ENCODE measurements at regions of chr19 and their contacts with region 1.

Region 1: DNA sequence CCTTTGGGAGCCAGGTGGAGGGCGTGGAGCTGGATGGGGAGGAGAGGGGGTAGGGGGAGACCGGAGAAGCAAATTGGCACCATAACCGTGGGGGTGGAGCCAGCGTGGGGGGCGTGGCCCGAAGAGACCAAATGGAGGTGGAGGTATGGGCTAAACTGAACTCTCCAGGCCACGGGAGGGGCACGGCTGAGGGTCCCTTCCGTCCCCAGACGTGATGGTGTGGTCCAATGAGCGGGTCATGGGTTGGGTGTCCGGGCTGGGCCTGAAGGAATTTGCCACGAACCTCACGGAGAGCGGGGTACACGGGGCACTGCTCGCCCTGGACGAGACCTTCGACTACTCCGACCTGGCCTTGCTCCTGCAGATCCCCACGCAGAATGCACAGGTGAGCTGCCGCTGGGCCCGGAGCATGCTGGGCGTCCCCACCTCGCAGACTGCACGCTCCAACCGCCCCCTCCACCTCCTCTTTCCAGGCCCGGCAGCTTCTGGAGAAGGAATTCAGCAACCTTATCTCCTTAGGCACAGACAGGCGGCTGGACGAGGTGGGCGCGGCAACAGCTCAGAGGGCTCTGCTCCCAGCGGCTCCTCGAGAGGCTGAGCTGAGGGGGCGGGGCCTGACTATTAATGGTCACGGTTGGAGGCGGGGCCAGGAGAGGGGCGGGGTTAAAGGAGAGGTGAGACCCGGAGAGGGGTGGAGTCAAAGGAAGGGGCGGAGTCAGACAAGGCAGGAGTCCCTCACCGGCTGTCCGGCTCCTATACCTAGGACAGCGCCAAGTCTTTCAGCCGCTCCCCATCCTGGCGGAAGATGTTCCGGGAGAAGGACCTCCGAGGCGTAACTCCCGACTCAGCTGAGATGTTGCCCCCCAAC is 6.2 kb downstream of the HRC start:
- DNase-seq: peak; percentile 92 to 99 (median 94)
- ATAC-seq: peak; percentile 63
- H3K4me3 ChIP-seq: peak overlapping the region; percentile 54
- H3K27ac ChIP-seq: peak overlapping the region; percentile 89
- H3K4me1 ChIP-seq: peaks cover 40 to 79% of the 10 kb centered on the region in 2 experiments
- H3K27me3 ChIP-seq: no peaks in the 10 kb centered on the region
- CTCF ChIP-seq: peak in 1 of 3 experiments; percentile 0; a peak in 1 of 6 replicates
- EP300 ChIP-seq: peak; percentile 52
- POLR2A ChIP-seq: peak; percentile 33; the same call in 1 of the 2 replicates
- RAD21 ChIP-seq: no peak

Region 2: GRCh38 chr19:48333467-48334384 is 815.3 kb before region 1 on chr19:
- CTCF ChIA-PET with region 1: no interaction called
- POLR2A ChIA-PET with region 1: no interaction called
- in situ Hi-C with region 1: no loop called
- intact Hi-C with region 1: loop called (anchors 5 kb)
- DNase-seq: peak; percentile 92 to 97 (median 94)
- ATAC-seq: peak; percentile 89
- H3K4me3 ChIP-seq: peak overlapping the region; percentile 50
- H3K27ac ChIP-seq: peak overlapping the region; percentile 91
- H3K4me1 ChIP-seq: peaks cover 21 to 61% of the 10 kb centered on the region in 2 experiments
- H3K27me3 ChIP-seq: no peaks in the 10 kb centered on the region
- CTCF ChIP-seq: peak; percentile 78 to 99 (median 98)
- EP300 ChIP-seq: no peak
- POLR2A ChIP-seq: peak; percentile 70
- RAD21 ChIP-seq: peak; percentile 98 to 99

Region 3: GRCh38 chr19:48993175-48994034 is 155.6 kb before region 1 on chr19 and contains the starts of genes GYS1 and RUVBL2:
- CTCF ChIA-PET with region 1: no interaction called
- POLR2A ChIA-PET with region 1: interaction called, 3 read pairs
- in situ Hi-C with region 1: no loop called
- intact Hi-C with region 1: loop called (anchors 10 kb)
- DNase-seq: peak; percentile 98 to 100 (median 99)
- ATAC-seq: peak; percentile 95
- H3K4me3 ChIP-seq: peak within 1 kb of the TSS; percentile 87
- H3K27ac ChIP-seq: peak within 1 kb of the TSS; percentile 91
- H3K4me1 ChIP-seq: peaks cover 5 to 30% of the 10 kb centered on the region in 2 experiments; a peak in 4 of 5 replicates
- H3K27me3 ChIP-seq: no peaks in the 10 kb centered on the region
- CTCF ChIP-seq: peak; percentile 97 to 98 (median 98)
- EP300 ChIP-seq: peak; percentile 85
- POLR2A ChIP-seq: peak; percentile 96
- RAD21 ChIP-seq: peak; percentile 36 to 46
- polyA plus RNA-seq, gene GYS1: 1.9 to 2.2 TPM
- polyA plus RNA-seq, gene RUVBL2: 71.4 to 95.3 TPM

Region 4: GRCh38 chr19:49097455-49098288 is 51.3 kb before region 1 on chr19:
- CTCF ChIA-PET with region 1: interaction called, 13 read pairs
- POLR2A ChIA-PET with region 1: interaction called, 3 read pairs
- in situ Hi-C with region 1: no loop called
- intact Hi-C with region 1: loop called (anchors 1 kb)
- DNase-seq: peak; percentile 76 to 86 (median 78)
- ATAC-seq: peak; percentile 89
- H3K4me3 ChIP-seq: no peak overlapping the region
- H3K27ac ChIP-seq: peak overlapping the region; percentile 46; the same call in 1 of the 3 replicates
- H3K4me1 ChIP-seq: peaks cover 0 to 11% of the 10 kb centered on the region in 2 experiments; a peak in 3 of 5 replicates
- H3K27me3 ChIP-seq: no peaks in the 10 kb centered on the region
- CTCF ChIP-seq: peak; percentile 92 to 98 (median 93)
- EP300 ChIP-seq: no peak
- POLR2A ChIP-seq: no peak; the same call in 1 of the 2 replicates
- RAD21 ChIP-seq: peak; percentile 86 to 93

Region 5: DNA sequence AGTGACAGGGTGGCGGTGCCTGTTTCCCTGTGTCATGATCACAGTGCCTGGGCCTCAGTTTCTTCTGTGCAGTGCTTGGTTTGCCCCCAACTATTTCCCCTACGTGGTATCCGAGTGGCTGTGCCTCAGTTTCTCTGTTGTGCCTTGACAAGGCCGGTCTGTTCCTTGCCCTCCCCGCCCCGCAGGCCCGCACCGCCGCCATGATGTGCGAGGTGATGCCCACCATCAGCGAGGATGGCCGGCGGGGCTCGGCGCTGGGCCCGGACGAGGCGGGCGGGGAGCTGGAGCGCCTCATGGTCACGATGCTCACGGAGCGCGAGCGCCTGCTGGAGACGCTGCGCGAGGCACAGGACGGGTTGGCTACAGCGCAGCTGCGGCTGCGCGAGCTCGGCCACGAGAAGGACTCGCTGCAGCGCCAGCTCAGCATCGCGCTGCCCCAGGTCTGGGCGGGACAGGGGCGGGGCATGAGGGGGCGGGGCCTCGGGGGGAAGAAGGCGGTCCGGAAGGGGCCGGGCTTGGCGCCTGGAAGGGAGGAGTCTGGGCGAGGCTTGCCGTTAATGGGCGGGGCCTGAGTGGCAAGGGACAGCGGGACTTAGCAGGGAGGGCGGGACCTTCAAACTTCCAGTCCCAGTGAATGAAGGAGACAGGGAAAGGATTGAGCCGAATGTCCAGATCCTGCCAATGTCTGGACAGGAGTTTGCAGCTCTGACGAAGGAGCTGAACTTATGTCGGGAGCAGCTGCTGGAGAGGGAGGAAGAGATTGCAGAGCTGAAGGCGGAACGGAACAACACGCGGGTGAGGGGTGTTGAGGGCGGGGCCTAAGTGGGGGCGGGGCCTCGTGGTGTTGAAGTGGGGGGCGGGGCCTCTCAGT is 21.1 kb before region 1 on chr19:
- CTCF ChIA-PET with region 1: interaction called, 4 read pairs
- POLR2A ChIA-PET with region 1: interaction called, 15 read pairs
- in situ Hi-C with region 1: no loop called
- intact Hi-C with region 1: no loop called
- DNase-seq: peak; percentile 95 to 97 (median 96)
- ATAC-seq: peak; percentile 97
- H3K4me3 ChIP-seq: peak overlapping the region; percentile 55
- H3K27ac ChIP-seq: peak overlapping the region; percentile 74
- H3K4me1 ChIP-seq: peaks cover 19 to 48% of the 10 kb centered on the region in 2 experiments
- H3K27me3 ChIP-seq: no peaks in the 10 kb centered on the region
- CTCF ChIP-seq: peak; percentile 18 to 58 (median 50); a peak in 4 of 6 replicates
- EP300 ChIP-seq: no peak
- POLR2A ChIP-seq: peak; percentile 36; the same call in 1 of the 2 replicates
- RAD21 ChIP-seq: peak in 1 of 2 experiments; percentile 43; a peak in 2 of 4 replicates

Region 6: GRCh38 chr19:49200238-49200862 is 51.3 kb after region 1 on chr19:
- CTCF ChIA-PET with region 1: no interaction called
- POLR2A ChIA-PET with region 1: interaction called, 8 read pairs
- in situ Hi-C with region 1: no loop called
- intact Hi-C with region 1: loop called (anchors 2 kb)
- DNase-seq: peak; percentile 84 to 97 (median 96)
- ATAC-seq: peak; percentile 97
- H3K4me3 ChIP-seq: peak overlapping the region; percentile 31
- H3K27ac ChIP-seq: peak overlapping the region; percentile 72; the same call in 1 of the 3 replicates
- H3K4me1 ChIP-seq: peaks cover 0 to 14% of the 10 kb centered on the region in 2 experiments; a peak in 3 of 5 replicates
- H3K27me3 ChIP-seq: no peaks in the 10 kb centered on the region
- CTCF ChIP-seq: no peak
- EP300 ChIP-seq: no peak
- POLR2A ChIP-seq: peak; percentile 45; the same call in 1 of the 2 replicates
- RAD21 ChIP-seq: no peak

Region 7: GRCh38 chr19:49443366-49444099 is 294.5 kb after region 1 on chr19:
- CTCF ChIA-PET with region 1: no interaction called
- POLR2A ChIA-PET with region 1: no interaction called
- in situ Hi-C with region 1: no loop called
- intact Hi-C with region 1: loop called (anchors 5 kb)
- DNase-seq: peak; percentile 69 to 96 (median 80)
- ATAC-seq: peak; percentile 88
- H3K4me3 ChIP-seq: peak overlapping the region; percentile 84
- H3K27ac ChIP-seq: peak overlapping the region; percentile 78
- H3K4me1 ChIP-seq: peaks cover 32 to 59% of the 10 kb centered on the region in 2 experiments
- H3K27me3 ChIP-seq: peaks cover 7 to 19% of the 10 kb centered on the region in 2 experiments; a peak in 4 of 5 replicates
- CTCF ChIP-seq: peak; percentile 86 to 94 (median 88)
- EP300 ChIP-seq: no peak
- POLR2A ChIP-seq: peak; percentile 58; the same call in 1 of the 2 replicates
- RAD21 ChIP-seq: peak; percentile 84 to 90

Measured in K562 (cell line).